IMR-90 (cell line): ENCODE measurements at regions of chr6 and their contacts with region 1.

Region 1: GRCh38 chr6:75963569-75963968 is 108.9 kb downstream of the IMPG1 start:
- DNase-seq: no peak
- ATAC-seq: no peak
- H3K4me3 ChIP-seq: no peak overlapping the region
- H3K27ac ChIP-seq: no peak overlapping the region
- H3K4me1 ChIP-seq: no peaks in the 10 kb centered on the region
- H3K27me3 ChIP-seq: no peaks in the 10 kb centered on the region
- CTCF ChIP-seq: no peak
- POLR2A ChIP-seq: no peak
- RAD21 ChIP-seq: no peak

Region 2: DNA sequence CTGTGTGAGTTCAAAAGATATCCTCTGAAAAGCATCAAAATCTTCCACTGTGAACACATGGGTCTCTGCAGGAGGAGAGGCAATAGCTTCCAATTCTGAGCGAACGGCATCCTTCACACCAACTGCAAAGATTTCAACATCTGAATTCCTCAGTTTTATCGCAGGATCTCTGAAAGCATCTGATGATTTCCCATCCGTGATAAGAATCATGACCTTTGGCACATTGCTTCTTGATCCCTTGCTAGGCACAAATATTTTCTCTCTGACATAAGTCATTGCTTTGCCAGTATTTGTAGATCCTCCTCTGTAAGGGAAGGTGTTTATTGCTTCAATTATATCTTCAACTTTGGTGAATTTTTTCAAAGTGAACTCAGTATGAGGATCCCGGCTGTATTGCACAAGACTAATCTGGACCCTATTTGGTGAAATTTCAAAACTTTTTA is 780.4 kb before region 1 on chr6:
- CTCF ChIA-PET with region 1: no interaction called
- POLR2A ChIA-PET with region 1: no interaction called
- dilution Hi-C with region 1: no loop called
- in situ Hi-C with region 1: no loop called
- intact Hi-C with region 1: no loop called
- DNase-seq: peak; percentile 36
- ATAC-seq: peak; percentile 60
- H3K4me3 ChIP-seq: no peak overlapping the region
- H3K27ac ChIP-seq: peak overlapping the region; percentile 47; the same call in 1 of the 2 replicates
- H3K4me1 ChIP-seq: peaks cover 5% of the 10 kb centered on the region
- H3K27me3 ChIP-seq: no peaks in the 10 kb centered on the region
- CTCF ChIP-seq: no peak
- POLR2A ChIP-seq: no peak
- RAD21 ChIP-seq: no peak

Region 3: DNA sequence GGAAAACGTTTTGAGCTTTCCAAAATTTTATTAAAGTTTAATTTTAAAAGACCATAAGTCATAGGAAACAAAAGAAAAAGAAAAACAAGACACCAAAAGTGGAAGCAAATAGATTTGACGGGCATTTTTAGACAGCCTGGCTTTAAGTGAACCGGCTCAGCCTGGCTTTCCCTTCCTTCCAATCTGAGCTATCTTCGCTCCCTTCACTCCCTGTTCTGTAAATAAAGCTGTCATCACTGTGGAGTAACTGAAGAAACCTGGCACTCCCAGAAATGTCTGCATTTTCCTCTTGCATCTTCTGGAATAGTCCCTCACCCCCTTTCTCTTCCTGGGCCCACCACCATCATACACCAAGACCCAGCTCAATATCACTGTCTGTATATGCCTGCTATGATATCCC is 23.0 kb before region 1 on chr6:
- CTCF ChIA-PET with region 1: no interaction called
- POLR2A ChIA-PET with region 1: no interaction called
- dilution Hi-C with region 1: no loop called
- in situ Hi-C with region 1: no loop called
- intact Hi-C with region 1: no loop called
- DNase-seq: no peak
- ATAC-seq: no peak
- H3K4me3 ChIP-seq: no peak overlapping the region
- H3K27ac ChIP-seq: no peak overlapping the region
- H3K4me1 ChIP-seq: no peaks in the 10 kb centered on the region
- H3K27me3 ChIP-seq: peaks cover 17% of the 10 kb centered on the region
- CTCF ChIP-seq: no peak
- POLR2A ChIP-seq: no peak
- RAD21 ChIP-seq: no peak

Region 4: DNA sequence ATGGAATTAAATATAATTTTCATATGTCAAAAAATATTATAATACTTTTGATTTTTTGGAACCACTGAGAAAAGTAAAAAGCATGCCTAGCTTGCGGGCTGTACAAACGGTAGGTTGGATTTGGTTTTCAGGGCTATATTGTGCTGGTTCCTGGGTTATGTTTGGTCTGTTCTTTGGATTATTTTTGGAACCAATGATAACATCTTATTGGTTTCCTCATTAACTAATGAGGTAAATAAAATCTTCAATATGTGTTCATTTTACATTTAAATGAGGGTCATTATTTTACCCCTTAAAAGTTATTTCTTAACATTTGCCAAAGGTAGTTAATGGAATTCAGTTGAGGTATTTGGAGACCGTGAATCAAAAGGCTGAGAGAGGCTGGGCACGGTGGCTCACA is 12.3 kb after region 1 on chr6:
- CTCF ChIA-PET with region 1: no interaction called
- POLR2A ChIA-PET with region 1: interaction called, 12 read pairs
- dilution Hi-C with region 1: no loop called
- in situ Hi-C with region 1: no loop called
- intact Hi-C with region 1: no loop called
- DNase-seq: no peak
- ATAC-seq: no peak
- H3K4me3 ChIP-seq: no peak overlapping the region
- H3K27ac ChIP-seq: no peak overlapping the region
- H3K4me1 ChIP-seq: no peaks in the 10 kb centered on the region
- H3K27me3 ChIP-seq: no peaks in the 10 kb centered on the region
- CTCF ChIP-seq: no peak
- POLR2A ChIP-seq: no peak
- RAD21 ChIP-seq: no peak